Body of pancreas (tissue), 4 donors: ENCODE measurements at regions of chr1 and their contacts with region 1.

Region 1: GRCh38 chr1:37859507-37860345 is at the start of gene MTF1:
- DNase-seq: peak; percentile 96 to 97 (median 96)
- ATAC-seq: peak; percentile 98
- H3K4me3 ChIP-seq: peak within 1 kb of the TSS; percentile 64 to 94
- H3K27ac ChIP-seq: peak within 1 kb of the TSS; percentile 85 to 94 (median 92)
- H3K4me1 ChIP-seq: peaks cover 31% of the 10 kb centered on the region
- H3K27me3 ChIP-seq: no peaks in the 10 kb centered on the region
- CTCF ChIP-seq: peak; percentile 80 to 96 (median 91)
- POLR2A ChIP-seq: peak; percentile 45 to 81 (median 75)
- total RNA-seq, gene MTF1: 1.3 to 3.9 TPM

Region 2: GRCh38 chr1:37692078-37692833 is 167.5 kb before region 1 on chr1 and contains the start of gene CDCA8:
- intact Hi-C with region 1: loop called (anchors 10 kb)
- DNase-seq: peak; percentile 97 to 98 (median 98)
- ATAC-seq: peak; percentile 91
- H3K4me3 ChIP-seq: peak within 1 kb of the TSS; percentile 50 to 74
- H3K27ac ChIP-seq: peak within 1 kb of the TSS; percentile 75 to 90 (median 85)
- H3K4me1 ChIP-seq: peaks cover 35% of the 10 kb centered on the region
- H3K27me3 ChIP-seq: no peaks in the 10 kb centered on the region
- CTCF ChIP-seq: peak; percentile 45 to 80 (median 61)
- POLR2A ChIP-seq: peak; percentile 34 to 58 (median 54)
- total RNA-seq, gene CDCA8: not detected

Region 3: DNA sequence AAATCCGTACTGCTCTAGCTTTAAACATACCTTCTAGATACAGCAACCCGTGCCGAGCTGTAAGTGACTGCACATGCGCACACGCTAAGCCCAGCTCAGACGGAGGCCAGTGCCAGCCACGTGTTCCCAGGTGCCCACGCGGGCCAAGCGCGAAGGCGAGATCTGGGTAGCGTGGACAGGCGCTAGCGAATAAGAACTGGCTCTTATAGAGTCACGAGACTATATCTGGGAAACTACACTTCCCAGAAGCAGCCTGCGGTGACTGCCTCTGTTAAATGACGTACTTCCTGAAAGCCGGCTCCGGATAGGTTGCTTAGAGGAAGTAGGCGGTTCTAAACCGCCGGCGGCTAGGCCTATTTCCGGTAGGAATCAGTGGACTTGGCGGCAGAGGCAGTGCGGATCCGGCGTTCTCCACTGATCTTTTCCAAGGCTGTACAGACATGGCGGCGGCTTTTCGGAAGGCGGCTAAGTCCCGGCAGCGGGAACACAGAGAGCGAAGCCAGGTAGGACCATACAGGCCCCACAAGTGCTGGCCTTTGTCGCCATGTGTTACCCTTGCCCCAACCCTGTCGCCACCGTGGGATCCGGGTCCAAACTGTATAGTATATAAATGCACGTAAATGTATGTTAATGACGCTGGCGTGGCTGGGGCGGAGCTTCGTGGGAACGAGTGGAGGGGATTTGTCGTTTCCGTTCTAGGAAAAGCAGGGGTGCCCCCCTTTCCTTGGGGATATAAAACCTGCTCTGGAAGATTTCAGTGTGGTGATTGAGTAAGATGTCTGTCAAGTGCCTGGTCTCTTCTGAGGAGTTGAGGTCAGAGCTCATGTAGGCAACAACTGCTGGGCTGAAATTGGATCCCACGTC is 152.9 kb after region 1 on chr1 and contains the start of gene UTP11:
- intact Hi-C with region 1: no loop called
- DNase-seq: peak; percentile 95 to 99 (median 96)
- ATAC-seq: peak; percentile 99
- H3K4me3 ChIP-seq: peak within 1 kb of the TSS; percentile 33 to 78
- H3K27ac ChIP-seq: peak within 1 kb of the TSS; percentile 79 to 88 (median 84)
- H3K4me1 ChIP-seq: peaks cover 29% of the 10 kb centered on the region
- H3K27me3 ChIP-seq: no peaks in the 10 kb centered on the region
- CTCF ChIP-seq: no peak
- POLR2A ChIP-seq: peak in 2 of 3 donors; percentile 83 to 85
- total RNA-seq, gene UTP11: 10.9 to 13.2 TPM

Region 4: GRCh38 chr1:38274974-38275373 is 415.2 kb after region 1 on chr1:
- intact Hi-C with region 1: no loop called
- DNase-seq: peak in 1 of 4 donors; percentile 34
- ATAC-seq: peak; percentile 33
- H3K4me3 ChIP-seq: no peak overlapping the region
- H3K27ac ChIP-seq: no peak overlapping the region
- H3K4me1 ChIP-seq: no peaks in the 10 kb centered on the region
- H3K27me3 ChIP-seq: peaks cover 0 to 7% of the 10 kb centered on the region in 2 donors
- CTCF ChIP-seq: no peak
- POLR2A ChIP-seq: no peak